ENCODE measurements at regions of chr2 and their contacts with region 1.

Region 1: GRCh38 chr2:223465793-223466192 is 136.4 kb downstream of the SCG2 start:
- DNase-seq: peak; percentile 96 to 98 (median 98)
- H3K4me3 ChIP-seq: no peak overlapping the region
- H3K4me3 Mint-ChIP-seq: peak overlapping the region in 1 of 2 donors; percentile 69
- H3K27ac ChIP-seq: peak overlapping the region; percentile 56 to 92
- H3K27ac Mint-ChIP-seq: peak overlapping the region; percentile 92 to 99 (median 96)
- H3K4me1 ChIP-seq: peaks cover 58 to 71% of the 10 kb centered on the region in 2 donors
- H3K4me1 Mint-ChIP-seq: peaks cover 68% of the 10 kb centered on the region
- H3K27me3 ChIP-seq: no peaks in the 10 kb centered on the region
- H3K27me3 Mint-ChIP-seq: peaks cover 0 to 3% (median 3%) of the 10 kb centered on the region in 3 donors
- CTCF ChIP-seq: no peak

Region 2: DNA sequence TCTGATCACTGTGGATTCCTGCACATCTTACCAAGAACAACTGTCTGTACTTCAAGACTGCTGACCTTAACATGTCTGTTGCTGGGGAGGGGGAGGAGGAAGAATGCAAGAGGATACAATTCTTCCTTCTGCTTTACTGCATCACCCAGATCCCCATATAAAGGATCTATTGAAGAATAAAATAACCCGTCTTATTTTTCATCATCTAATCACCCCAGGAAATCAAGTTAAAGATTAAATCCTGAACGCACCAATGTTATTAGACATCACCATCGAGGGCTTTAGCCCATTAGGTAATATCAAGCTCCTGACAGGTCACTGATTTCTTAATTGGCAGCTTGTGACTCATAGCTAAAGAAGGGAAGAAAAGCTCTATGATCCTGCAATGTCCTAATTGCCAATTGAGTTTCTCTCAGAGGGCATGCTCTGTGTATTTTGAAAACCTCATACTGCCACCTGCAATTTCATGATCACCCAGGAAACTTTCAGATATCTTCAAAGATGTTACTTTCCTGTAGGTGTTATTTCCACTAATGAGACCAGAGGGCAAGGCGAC is 489.2 kb before region 1 on chr2:
- intact Hi-C with region 1: loop called in 1 of 2 experiments (anchors 10 kb)
- DNase-seq: peak in 2 of 3 donors; percentile 22 to 55
- H3K4me3 ChIP-seq: no peak overlapping the region
- H3K4me3 Mint-ChIP-seq: no peak overlapping the region
- H3K27ac ChIP-seq: no peak overlapping the region
- H3K27ac Mint-ChIP-seq: no peak overlapping the region
- H3K4me1 ChIP-seq: no peaks in the 10 kb centered on the region
- H3K4me1 Mint-ChIP-seq: peaks cover 4% of the 10 kb centered on the region
- H3K27me3 ChIP-seq: no peaks in the 10 kb centered on the region
- H3K27me3 Mint-ChIP-seq: peaks cover 0 to 10% (median 3%) of the 10 kb centered on the region in 3 donors
- CTCF ChIP-seq: no peak